ENCODE measurements at regions of chr3 and their contacts with region 1.

Region 1: DNA sequence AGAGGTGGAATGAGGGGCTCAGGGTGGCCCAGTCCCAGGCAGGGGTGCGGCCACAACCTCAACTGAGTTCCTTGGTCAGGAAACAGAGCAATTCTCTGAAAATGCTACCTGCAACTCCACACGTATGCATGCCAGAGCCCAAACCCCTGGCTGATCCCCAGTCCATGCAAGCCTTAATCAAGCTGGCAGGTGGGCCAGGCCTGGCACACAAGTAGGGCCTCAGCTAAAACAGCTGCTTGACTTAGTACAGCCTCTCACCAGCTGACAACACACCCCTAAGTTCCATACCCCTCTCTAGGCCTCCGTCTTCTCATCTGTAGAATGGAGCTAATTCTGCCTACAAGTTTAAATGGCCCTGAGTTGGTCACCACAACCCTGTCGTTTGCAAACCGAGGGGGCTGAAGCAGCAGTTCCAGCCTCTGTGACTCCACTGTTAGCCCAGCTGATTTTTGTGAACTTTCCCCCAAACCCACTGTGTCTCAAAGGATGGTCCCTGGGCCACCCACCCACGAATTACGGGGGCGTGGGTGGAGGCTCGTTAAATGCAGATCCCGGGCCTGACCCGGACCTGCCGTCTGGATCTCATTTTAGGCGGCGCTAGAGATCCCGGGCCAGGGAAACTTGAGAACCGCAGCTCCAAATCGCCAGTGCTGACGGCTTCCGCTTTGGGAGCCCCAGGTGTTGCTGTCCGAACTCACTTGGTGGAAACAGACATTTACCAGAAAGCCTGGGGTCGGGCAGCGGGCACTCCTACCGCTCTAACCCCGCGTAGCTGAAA is 927 bp downstream of the CHDH start:
- DNase-seq: peak; percentile 78
- ATAC-seq: peak; percentile 58

Region 2: DNA sequence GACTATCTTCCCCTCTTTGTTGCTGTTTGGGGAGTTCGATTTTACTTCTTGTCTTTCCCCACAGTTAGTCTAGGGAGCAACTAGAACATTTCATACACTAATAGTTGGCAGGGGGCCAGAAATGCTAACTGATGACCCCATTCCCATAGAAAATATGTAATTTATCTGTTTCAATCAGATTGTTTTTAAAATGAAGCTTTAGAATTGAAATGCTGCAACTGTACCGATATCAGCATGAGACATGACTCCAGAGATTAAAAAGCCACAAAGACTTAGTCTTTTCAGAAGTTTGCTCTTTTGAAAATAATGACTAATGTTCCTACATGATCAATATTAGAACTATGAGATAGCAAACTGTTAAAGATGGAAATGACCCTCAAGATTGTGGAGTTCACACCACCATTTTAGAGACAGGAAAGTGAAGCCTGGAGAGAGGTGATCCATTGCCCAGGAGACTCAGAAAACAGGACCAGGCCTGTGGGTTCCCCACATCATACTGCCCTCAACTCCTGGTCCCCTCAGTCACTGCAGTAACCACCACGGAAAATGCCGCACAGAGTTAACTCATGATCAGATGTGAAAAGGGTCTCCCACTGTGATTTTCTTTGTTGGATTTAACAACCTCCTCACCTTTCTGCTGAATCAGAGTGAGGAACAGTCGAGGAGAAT is 129.3 kb before region 1 on chr3:
- intact Hi-C with region 1: loop called (anchors 5 kb)
- DNase-seq: no peak
- ATAC-seq: no peak

Region 3: GRCh38 chr3:53729618-53730017 is 115.7 kb before region 1 on chr3:
- intact Hi-C with region 1: loop called (anchors 5 kb)
- DNase-seq: no peak
- ATAC-seq: no peak

Region 4: GRCh38 chr3:53813876-53814275 is 31.4 kb before region 1 on chr3:
- intact Hi-C with region 1: loop called (anchors 2 kb)
- DNase-seq: no peak
- ATAC-seq: no peak

Measured in Right ventricle myocardium inferior (tissue), 1 donor.